GM10248 (cell line): ENCODE measurements at regions of chr18 and their contacts with region 1.

Region 1: GRCh38 chr18:59402432-59403090 is 43.5 kb upstream of the LMAN1 start:
- DNase-seq: peak; percentile 80
- CTCF ChIP-seq: peak; percentile 85

Region 2: DNA sequence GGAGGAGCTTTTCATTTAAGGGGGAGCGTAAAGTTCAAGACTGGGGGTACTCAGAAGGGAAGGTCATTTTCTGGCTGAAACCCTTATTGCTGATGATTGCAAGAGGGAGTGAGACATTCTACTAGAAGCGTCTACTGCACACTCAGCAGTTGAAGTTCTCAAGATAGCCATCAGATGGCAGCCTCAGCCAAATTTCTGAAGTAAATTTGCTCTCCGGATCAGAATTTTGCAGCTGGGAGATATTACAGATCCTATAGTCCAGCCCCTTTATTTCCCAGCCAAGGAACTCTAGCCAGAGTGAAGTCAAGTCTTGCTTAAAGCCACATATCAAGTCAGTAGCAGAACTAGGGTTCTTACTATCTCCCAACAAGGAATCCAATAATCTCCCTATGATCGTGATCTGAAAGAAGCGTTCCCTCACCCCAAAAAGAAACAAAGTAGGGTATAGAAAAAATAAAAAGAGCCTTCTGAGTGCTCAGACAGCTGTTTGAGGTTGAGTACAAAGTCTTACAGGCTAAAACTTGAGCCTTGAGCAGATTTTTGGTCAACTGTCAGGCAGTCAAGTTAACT is 153.3 kb before region 1 on chr18:
- CTCF ChIA-PET with region 1: interaction called, 66 read pairs
- POLR2A ChIA-PET with region 1: no interaction called
- DNase-seq: peak; percentile 60
- CTCF ChIP-seq: peak; percentile 66

Region 3: GRCh38 chr18:59318460-59319050 is 84.0 kb before region 1 on chr18 and contains the start of gene CPLX4:
- CTCF ChIA-PET with region 1: interaction called, 239 read pairs
- POLR2A ChIA-PET with region 1: no interaction called
- DNase-seq: no peak
- CTCF ChIP-seq: no peak

Region 4: DNA sequence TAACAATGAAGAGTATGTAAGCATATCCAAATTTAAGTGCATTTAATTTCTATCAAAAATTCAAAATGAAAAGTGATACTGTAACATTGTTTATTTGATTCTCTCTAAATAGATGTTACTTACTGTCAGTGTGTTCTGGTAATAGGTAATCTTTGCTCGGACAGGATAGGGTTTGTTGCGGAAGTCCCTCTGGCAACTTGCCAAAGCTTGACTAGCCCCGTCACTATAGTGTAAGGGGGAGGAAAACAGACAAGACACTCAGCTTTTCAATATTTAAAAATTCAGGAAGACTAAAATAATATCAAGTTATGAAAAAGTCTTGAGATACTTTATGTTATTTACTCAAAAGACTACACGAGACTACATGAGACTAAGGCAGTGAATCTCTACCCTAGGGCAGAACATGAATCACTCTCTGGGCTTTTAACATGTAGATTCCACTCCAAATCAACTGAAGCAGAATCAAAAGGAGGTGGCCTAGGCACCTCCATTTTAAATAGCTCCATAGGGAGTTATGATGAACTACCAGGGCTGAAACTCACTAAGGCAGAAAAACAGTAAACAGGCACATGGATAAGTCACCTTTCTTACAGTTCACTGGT is 49.4 kb before region 1 on chr18:
- CTCF ChIA-PET with region 1: interaction called, 12 read pairs
- POLR2A ChIA-PET with region 1: no interaction called
- DNase-seq: no peak
- CTCF ChIP-seq: no peak

Region 5: DNA sequence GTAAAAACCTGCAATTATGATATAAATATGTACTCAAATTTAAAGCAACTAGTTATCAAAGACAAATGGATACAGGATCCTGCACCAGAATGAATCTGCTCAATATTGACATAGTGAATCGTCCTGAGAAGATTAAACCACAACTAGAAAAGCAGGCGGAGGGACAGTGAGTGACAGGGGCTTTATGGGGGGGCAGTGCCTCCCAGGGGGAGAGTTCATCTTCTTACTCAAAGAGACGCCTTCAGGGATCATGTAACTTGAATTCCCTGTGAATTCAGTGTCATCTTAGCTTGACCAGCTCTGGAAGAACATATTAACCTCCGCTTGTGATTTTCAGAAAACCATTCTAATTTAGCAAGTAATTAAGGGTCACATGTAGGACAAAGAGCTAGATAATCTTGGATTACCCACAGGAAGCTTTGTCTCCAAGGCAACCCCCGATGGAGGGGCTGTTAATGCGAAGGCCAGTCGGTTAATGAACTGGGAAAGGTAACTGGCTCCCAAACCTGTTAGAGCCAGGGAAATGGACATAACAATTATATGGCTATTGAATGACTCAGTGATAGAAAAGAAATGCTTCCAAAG is 26.1 kb before region 1 on chr18:
- CTCF ChIA-PET with region 1: interaction called, 16 read pairs
- POLR2A ChIA-PET with region 1: no interaction called
- DNase-seq: no peak
- CTCF ChIP-seq: no peak

Region 6: DNA sequence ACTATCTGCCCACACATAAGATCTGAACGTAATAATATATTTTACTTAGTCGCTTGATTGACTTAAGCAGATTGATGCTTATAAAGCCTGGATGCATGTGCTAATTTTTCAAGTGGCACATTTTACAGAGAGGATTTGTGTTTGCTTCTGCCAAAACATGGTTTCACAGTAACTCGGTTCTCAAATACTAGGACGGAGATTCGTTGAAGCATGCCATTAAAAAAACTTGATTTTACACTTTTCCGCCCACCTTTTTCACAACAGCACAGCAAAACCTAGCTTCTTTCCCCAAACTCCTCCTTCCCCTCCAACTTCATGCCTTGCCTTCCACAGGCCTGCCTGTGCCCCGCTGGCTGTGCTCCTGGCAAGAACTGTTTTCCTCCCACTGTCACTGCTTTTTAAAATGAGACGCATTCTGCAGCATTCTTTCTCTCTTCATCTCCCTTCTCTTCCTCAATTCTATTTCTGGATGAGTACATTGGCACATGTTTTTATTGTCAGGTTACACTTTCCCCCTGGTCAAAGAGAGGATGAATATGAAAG is 11.6 kb after region 1 on chr18:
- CTCF ChIA-PET with region 1: interaction called, 12 read pairs
- POLR2A ChIA-PET with region 1: no interaction called
- DNase-seq: no peak
- CTCF ChIP-seq: no peak

Region 7: GRCh38 chr18:59478591-59478990 is 76.0 kb after region 1 on chr18:
- CTCF ChIA-PET with region 1: no interaction called
- POLR2A ChIA-PET with region 1: no interaction called
- DNase-seq: no peak
- CTCF ChIP-seq: no peak

Region 8: GRCh38 chr18:59612381-59612780 is 209.8 kb after region 1 on chr18:
- CTCF ChIA-PET with region 1: no interaction called
- POLR2A ChIA-PET with region 1: no interaction called
- DNase-seq: no peak
- CTCF ChIP-seq: no peak